Mammary epithelial cell (primary cell): ENCODE measurements at regions of chr2 and their contacts with region 1.

Region 1: DNA sequence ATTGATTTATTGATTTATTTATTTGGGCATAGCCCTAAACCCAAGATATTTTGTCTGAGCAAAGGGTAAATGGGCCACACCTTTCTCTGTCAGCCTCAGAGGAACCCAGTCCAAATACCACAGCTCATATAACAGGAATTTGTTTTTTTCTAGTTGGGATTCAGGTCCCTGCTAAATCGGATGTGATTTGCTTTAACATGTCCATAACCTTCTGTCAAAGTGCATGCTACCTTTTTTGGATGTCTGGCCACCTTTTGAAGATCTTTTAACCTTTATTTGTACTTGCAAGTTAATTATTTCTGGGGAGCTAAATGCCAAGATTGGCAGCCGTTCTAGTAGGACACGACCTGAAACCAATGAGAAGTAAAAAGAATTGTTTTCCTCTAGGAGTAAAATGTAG is 303.2 kb upstream of the UBE2E3 start:
- DNase-seq: peak; percentile 54
- H3K4me3 ChIP-seq: no peak overlapping the region
- H3K27ac ChIP-seq: peak overlapping the region; percentile 33
- H3K4me1 ChIP-seq: peaks cover 28% of the 10 kb centered on the region
- H3K27me3 ChIP-seq: no peaks in the 10 kb centered on the region
- CTCF ChIP-seq: no peak

Region 2: DNA sequence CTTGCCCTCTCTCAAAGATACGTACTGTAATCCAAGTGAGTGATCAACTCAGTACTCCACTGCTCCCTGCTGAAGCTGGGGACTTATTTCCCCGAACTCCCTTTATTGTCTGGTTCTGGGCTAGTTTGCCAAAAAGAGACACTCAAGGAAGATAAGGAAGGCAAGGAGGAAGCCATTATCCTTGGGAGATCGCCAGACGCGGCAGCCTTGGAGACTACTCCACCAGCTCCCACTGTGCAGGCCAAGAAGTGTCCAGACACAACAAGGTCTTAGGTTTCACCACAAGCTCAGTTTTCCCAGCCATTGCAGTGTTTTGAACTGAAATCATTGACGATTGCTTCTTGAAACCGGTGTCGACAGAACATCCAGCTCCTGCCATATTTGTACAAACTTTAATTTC is 136.4 kb before region 1 on chr2:
- CTCF ChIA-PET with region 1: no interaction called
- dilution Hi-C with region 1: no loop called
- in situ Hi-C with region 1: no loop called
- intact Hi-C with region 1: no loop called
- DNase-seq: no peak
- H3K4me3 ChIP-seq: no peak overlapping the region
- H3K27ac ChIP-seq: no peak overlapping the region
- H3K4me1 ChIP-seq: no peaks in the 10 kb centered on the region
- H3K27me3 ChIP-seq: no peaks in the 10 kb centered on the region
- CTCF ChIP-seq: no peak

Region 3: DNA sequence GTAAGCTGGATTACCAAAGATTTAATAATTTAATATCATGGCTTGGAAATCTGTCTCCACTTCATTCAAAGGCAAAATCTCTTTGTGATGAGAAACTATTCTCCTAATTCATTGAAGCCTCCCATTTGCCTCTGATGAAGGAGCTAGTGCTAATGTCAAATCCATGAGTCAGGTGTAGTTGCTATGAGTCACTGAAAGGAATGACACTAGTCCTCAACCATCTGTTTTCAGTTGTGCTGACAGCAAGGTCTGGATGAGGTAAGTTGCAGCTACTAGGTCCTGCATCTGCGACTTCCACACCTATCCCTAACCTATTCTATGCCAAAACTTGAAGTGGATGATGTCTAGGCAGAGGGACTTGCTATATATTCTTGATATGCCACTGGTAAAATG is 20.7 kb before region 1 on chr2:
- CTCF ChIA-PET with region 1: no interaction called
- dilution Hi-C with region 1: no loop called
- in situ Hi-C with region 1: no loop called
- intact Hi-C with region 1: loop called (anchors 2 kb)
- DNase-seq: peak; percentile 93
- H3K4me3 ChIP-seq: no peak overlapping the region
- H3K27ac ChIP-seq: no peak overlapping the region
- H3K4me1 ChIP-seq: peaks cover 24% of the 10 kb centered on the region
- H3K27me3 ChIP-seq: no peaks in the 10 kb centered on the region
- CTCF ChIP-seq: no peak

Region 4: GRCh38 chr2:181070119-181070835 is 393.1 kb after region 1 on chr2:
- CTCF ChIA-PET with region 1: no interaction called
- dilution Hi-C with region 1: no loop called
- in situ Hi-C with region 1: no loop called
- intact Hi-C with region 1: no loop called
- DNase-seq: peak; percentile 64
- H3K4me3 ChIP-seq: no peak overlapping the region
- H3K27ac ChIP-seq: peak overlapping the region; percentile 23
- H3K4me1 ChIP-seq: peaks cover 31% of the 10 kb centered on the region
- H3K27me3 ChIP-seq: no peaks in the 10 kb centered on the region
- CTCF ChIP-seq: no peak